ENCODE measurements at regions of chr2 and their contacts with region 1.

Region 1: DNA sequence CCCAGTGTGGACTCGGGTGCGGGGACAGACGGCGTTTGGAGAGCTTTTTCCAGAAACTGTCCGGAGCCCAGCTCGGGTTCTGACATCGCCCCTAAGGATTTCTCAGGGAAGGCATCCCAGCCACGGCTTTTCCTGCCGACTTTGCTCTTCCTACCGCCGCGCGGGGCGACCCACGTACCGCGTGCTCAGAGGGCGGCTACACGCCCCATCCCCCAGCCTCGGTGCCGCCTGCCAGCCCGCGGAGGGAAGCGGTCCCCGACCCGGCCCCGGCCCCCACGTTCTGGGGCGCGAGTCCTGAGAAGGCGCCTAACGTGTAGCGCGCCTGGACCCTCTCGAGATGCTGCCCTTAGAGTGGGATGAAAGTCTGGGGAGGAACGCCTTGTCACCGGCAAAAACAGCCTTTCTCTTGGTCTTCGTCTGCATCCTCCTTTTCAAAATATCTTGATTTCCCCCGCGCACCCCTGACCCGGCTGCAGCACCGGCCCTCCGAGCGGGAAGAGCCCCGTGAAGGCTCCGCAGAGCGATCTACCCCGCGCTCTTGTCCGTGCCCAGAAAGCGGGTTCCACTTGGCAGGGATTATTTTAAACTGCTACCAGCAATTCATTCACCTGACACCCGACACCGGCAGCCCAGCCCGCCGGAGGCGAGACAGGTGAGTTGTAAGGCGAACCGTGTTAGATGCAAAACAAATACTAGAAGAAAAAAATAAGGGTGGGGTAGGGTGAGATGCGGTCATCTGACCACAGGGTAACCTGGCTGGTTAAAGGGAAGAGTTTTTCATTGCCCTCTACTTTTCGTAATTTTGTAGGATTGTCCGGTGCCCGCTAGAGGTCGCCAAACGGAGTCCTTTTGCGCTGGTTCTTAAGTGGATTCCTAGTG is 812 bp upstream of the KCNG3 start:
- DNase-seq: peak; percentile 85
- H3K4me3 ChIP-seq: peak overlapping the region; percentile 71 to 75
- H3K27ac ChIP-seq: peak overlapping the region in 1 of 2 experiments; percentile 47; a peak in 2 of 4 replicates
- H3K4me1 ChIP-seq: peaks cover 0 to 16% of the 10 kb centered on the region in 2 experiments; a peak in 2 of 4 replicates
- H3K27me3 ChIP-seq: no peaks in the 10 kb centered on the region; the same call in 1 of the 2 replicates
- CTCF ChIP-seq: peak; percentile 99
- EP300 ChIP-seq: 0 out of 4 replicates have a peak, but pooled peaks of 1 of the 2 experiments have one; percentile 24
- RAD21 ChIP-seq: peak; percentile 96

Region 2: GRCh38 chr2:42513257-42513918 is 18.8 kb after region 1 on chr2:
- CTCF ChIA-PET with region 1: interaction called, 13 read pairs
- POLR2A ChIA-PET with region 1: no interaction called
- DNase-seq: peak; percentile 53
- H3K4me3 ChIP-seq: no peak overlapping the region
- H3K27ac ChIP-seq: no peak overlapping the region
- H3K4me1 ChIP-seq: peaks cover 4 to 6% of the 10 kb centered on the region in 2 experiments; a peak in 2 of 4 replicates
- H3K27me3 ChIP-seq: no peaks in the 10 kb centered on the region
- CTCF ChIP-seq: peak; percentile 71
- EP300 ChIP-seq: no peak
- RAD21 ChIP-seq: peak; percentile 71

Region 3: GRCh38 chr2:42568401-42569115 is 74.0 kb after region 1 on chr2 and contains the start of gene MTA3:
- CTCF ChIA-PET with region 1: interaction called, 11 read pairs
- POLR2A ChIA-PET with region 1: interaction called, 3 read pairs
- DNase-seq: peak; percentile 93
- H3K4me3 ChIP-seq: peak within 1 kb of the TSS; percentile 63 to 78
- H3K27ac ChIP-seq: peak within 1 kb of the TSS; percentile 40 to 88
- H3K4me1 ChIP-seq: peaks cover 0 to 12% of the 10 kb centered on the region in 2 experiments; a peak in 2 of 4 replicates
- H3K27me3 ChIP-seq: no peaks in the 10 kb centered on the region
- CTCF ChIP-seq: no peak
- EP300 ChIP-seq: no peak
- RAD21 ChIP-seq: no peak
- polyA plus RNA-seq, gene MTA3: 30.8 and 32.3 TPM in 2 replicates